ENCODE measurements at regions of chr14 and their contacts with region 1.

Region 1: GRCh38 chr14:75452900-75453747 is 25.3 kb downstream of the JDP2 start:
- DNase-seq: no peak
- ATAC-seq: no peak
- H3K4me3 ChIP-seq: no peak overlapping the region
- H3K4me3 Mint-ChIP-seq: no peak overlapping the region
- H3K27ac ChIP-seq: no peak overlapping the region
- H3K27ac Mint-ChIP-seq: no peak overlapping the region
- H3K4me1 ChIP-seq: peaks cover 0 to 9% of the 10 kb centered on the region in 2 donors
- H3K4me1 Mint-ChIP-seq: peaks cover 8% of the 10 kb centered on the region
- H3K27me3 ChIP-seq: no peaks in the 10 kb centered on the region
- H3K27me3 Mint-ChIP-seq: no peaks in the 10 kb centered on the region
- CTCF ChIP-seq: no peak

Region 2: GRCh38 chr14:75132382-75133086 is 320.6 kb before region 1 on chr14:
- CTCF ChIA-PET with region 1: interaction called, 10 read pairs
- POLR2A ChIA-PET with region 1: no interaction called
- intact Hi-C with region 1: no loop called
- DNase-seq: peak; percentile 85
- ATAC-seq: peak; percentile 95
- H3K4me3 ChIP-seq: no peak overlapping the region
- H3K4me3 Mint-ChIP-seq: no peak overlapping the region
- H3K27ac ChIP-seq: peak overlapping the region in 1 of 2 donors; percentile 49
- H3K27ac Mint-ChIP-seq: peak overlapping the region; percentile 3
- H3K4me1 ChIP-seq: peaks cover 4 to 5% of the 10 kb centered on the region in 2 donors
- H3K4me1 Mint-ChIP-seq: peaks cover 14% of the 10 kb centered on the region
- H3K27me3 ChIP-seq: no peaks in the 10 kb centered on the region
- H3K27me3 Mint-ChIP-seq: no peaks in the 10 kb centered on the region
- CTCF ChIP-seq: peak; percentile 78

Measured in B cell (primary cell).